Activated CD8-positive, alpha-beta T cell treated with anti-CD3 and anti-CD28 coated beads, Interleukin-2, amount 10 ng/mL, durations not matched to agents 7 days and 5 days (primary cell): ENCODE measurements at regions of chr19 and their contacts with region 1.

Region 1: DNA sequence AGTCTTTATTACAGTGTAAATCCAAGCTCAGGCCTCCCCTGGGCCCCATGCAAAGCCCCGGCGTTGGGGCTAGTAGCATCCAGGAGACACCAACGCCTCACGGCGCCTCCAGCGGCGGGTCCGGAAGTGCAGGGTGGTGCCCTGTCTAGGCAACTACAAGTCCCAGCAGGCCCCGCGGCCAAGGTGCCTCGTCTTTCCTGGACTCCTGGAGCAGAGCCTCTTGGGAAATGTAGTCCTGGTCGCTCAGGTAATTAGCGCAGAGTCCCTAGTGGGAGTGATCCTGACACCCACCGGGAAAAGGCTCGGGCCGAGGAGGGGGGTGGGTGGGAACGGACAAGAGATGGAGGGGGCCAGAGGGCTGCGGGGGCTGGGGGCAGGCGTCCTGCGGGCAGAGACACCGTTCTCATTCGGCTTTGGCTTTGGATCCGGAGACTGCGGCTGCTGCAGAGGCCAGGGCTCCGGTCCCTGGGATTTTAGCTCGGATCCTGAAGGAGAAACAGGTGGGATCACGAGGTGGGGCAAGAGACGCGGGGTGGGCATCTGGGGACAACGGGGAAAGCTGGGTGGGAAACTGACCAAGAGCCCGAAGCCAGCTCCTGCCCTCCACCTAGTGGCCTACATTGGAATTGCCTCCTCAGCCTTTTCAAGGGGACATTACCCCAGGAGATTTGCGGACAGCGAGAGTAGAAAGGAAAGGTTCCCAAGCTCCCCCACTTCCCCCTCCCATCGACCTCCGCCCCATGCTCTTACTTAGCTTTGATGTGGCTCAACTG is 11.4 kb downstream of the RTN2 start:
- DNase-seq: peak; percentile 99
- ATAC-seq: peak; percentile 97
- H3K4me3 Mint-ChIP-seq: peak overlapping the region; percentile 86
- H3K27ac Mint-ChIP-seq: peak overlapping the region; percentile 83
- H3K4me1 Mint-ChIP-seq: peaks cover 11% of the 10 kb centered on the region
- H3K27me3 Mint-ChIP-seq: peaks cover 3% of the 10 kb centered on the region

Region 2: GRCh38 chr19:45405435-45406225 is 79.9 kb before region 1 on chr19:
- CTCF ChIA-PET with region 1: interaction called, 26 read pairs
- POLR2A ChIA-PET with region 1: no interaction called
- DNase-seq: peak; percentile 90
- ATAC-seq: peak; percentile 59
- H3K4me3 Mint-ChIP-seq: peak overlapping the region; percentile 96
- H3K27ac Mint-ChIP-seq: peak overlapping the region; percentile 93
- H3K4me1 Mint-ChIP-seq: peaks cover 46% of the 10 kb centered on the region
- H3K27me3 Mint-ChIP-seq: peaks cover 21% of the 10 kb centered on the region

Region 3: GRCh38 chr19:45439569-45440254 is 45.8 kb before region 1 on chr19:
- CTCF ChIA-PET with region 1: interaction called, 455 read pairs
- POLR2A ChIA-PET with region 1: interaction called, 4 read pairs
- DNase-seq: peak; percentile 92
- ATAC-seq: peak; percentile 72
- H3K4me3 Mint-ChIP-seq: peak overlapping the region; percentile 62
- H3K27ac Mint-ChIP-seq: peak overlapping the region; percentile 83
- H3K4me1 Mint-ChIP-seq: peaks cover 37% of the 10 kb centered on the region
- H3K27me3 Mint-ChIP-seq: peaks cover 2% of the 10 kb centered on the region

Region 4: GRCh38 chr19:45469132-45469944 is 16.2 kb before region 1 on chr19:
- CTCF ChIA-PET with region 1: interaction called, 44 read pairs
- POLR2A ChIA-PET with region 1: interaction called, 4 read pairs
- DNase-seq: peak; percentile 96
- ATAC-seq: peak; percentile 28
- H3K4me3 Mint-ChIP-seq: peak overlapping the region; percentile 87
- H3K27ac Mint-ChIP-seq: peak overlapping the region; percentile 95
- H3K4me1 Mint-ChIP-seq: peaks cover 38% of the 10 kb centered on the region
- H3K27me3 Mint-ChIP-seq: peaks cover 37% of the 10 kb centered on the region

Region 5: DNA sequence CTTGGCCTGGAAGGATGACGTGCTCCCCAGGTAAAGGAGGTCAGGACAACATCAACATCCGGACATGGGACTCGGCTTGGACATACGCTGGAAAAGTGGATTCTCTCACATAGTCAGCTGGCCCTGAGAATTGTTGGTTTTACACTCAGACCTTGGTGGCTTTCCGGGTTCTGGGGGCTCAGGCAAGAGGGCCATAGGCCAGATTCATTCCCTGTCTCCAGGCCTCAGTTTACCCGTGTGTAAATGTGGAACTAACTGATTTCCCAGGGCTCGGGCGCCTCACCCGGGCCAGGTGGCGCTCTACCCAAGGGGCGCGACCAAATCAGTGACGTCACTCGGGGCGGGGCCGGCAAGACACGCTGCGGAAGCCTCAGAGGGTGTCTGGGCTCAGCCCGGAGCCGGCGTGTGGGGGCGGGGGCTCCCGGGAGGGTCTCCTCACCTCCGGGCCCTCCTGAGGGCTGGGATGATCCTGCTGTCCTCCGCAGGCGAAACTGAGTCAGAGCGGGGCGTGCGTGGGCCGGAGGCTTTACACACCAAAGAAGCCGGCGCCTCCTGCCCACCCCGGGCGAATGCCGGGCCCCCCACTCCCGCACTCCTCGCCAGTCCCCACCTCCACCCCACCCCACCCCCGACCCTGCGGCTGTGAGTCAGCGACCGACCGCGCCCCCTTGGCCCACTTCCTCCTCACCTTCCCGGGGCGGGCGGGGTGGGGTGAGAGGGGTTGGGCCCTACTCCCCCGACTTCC is 20.9 kb after region 1 on chr19:
- CTCF ChIA-PET with region 1: interaction called, 14 read pairs
- POLR2A ChIA-PET with region 1: no interaction called
- DNase-seq: peak; percentile 98
- ATAC-seq: peak; percentile 74
- H3K4me3 Mint-ChIP-seq: peak overlapping the region; percentile 88
- H3K27ac Mint-ChIP-seq: peak overlapping the region; percentile 98
- H3K4me1 Mint-ChIP-seq: peaks cover 42% of the 10 kb centered on the region
- H3K27me3 Mint-ChIP-seq: no peaks in the 10 kb centered on the region

Region 6: GRCh38 chr19:45584332-45585157 is 99.1 kb after region 1 on chr19 and contains the start of gene OPA3:
- CTCF ChIA-PET with region 1: interaction called, 12 read pairs
- POLR2A ChIA-PET with region 1: no interaction called
- DNase-seq: peak; percentile 100
- ATAC-seq: peak; percentile 96
- H3K4me3 Mint-ChIP-seq: peak within 1 kb of the TSS; percentile 92
- H3K27ac Mint-ChIP-seq: peak within 1 kb of the TSS; percentile 97
- H3K4me1 Mint-ChIP-seq: peaks cover 15% of the 10 kb centered on the region
- H3K27me3 Mint-ChIP-seq: peaks cover 6% of the 10 kb centered on the region
- total RNA-seq, gene OPA3: 13.4 to 14.9 TPM